Heart left ventricle (tissue), 16 donors: ENCODE measurements at regions of chr5 and their contacts with region 1.

Region 1: GRCh38 chr5:30392897-30393296 is 800.6 kb upstream of the CDH6 start:
- DNase-seq: no peak
- ATAC-seq: no peak
- H3K4me3 ChIP-seq: no peak overlapping the region
- H3K27ac ChIP-seq: no peak overlapping the region
- H3K4me1 ChIP-seq: no peaks in the 10 kb centered on the region
- H3K27me3 ChIP-seq: no peaks in the 10 kb centered on the region
- CTCF ChIP-seq: no peak
- POLR2A ChIP-seq: no peak

Region 2: DNA sequence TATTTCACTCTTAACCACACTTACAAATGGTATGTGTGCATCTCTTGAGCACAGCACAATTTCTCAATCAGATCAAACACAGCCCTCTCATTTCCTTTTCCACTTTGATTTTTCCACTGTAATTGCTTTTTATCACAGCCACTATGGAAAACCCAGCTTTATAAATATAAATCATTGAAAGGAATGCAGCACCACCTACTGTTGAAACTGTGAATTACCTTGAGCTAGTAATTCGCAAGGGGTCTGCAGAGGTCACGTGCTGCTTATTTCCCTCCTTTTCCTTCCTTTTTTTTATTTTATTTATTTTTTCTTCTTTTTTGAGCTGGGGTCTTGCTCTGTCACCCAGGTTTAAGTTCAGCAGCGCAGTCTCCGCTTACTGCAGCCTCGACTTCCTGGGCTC is 877.5 kb after region 1 on chr5:
- intact Hi-C with region 1: loop called in 1 of 10 experiments (anchors 10 kb)
- DNase-seq: no peak
- ATAC-seq: no peak
- H3K4me3 ChIP-seq: no peak overlapping the region
- H3K27ac ChIP-seq: no peak overlapping the region
- H3K4me1 ChIP-seq: peaks cover 0 to 3% (median 0%) of the 10 kb centered on the region in 12 donors
- H3K27me3 ChIP-seq: peaks cover 0 to 9% (median 0%) of the 10 kb centered on the region in 9 donors
- CTCF ChIP-seq: peak; percentile 41 to 64 (median 50)
- POLR2A ChIP-seq: no peak